ENCODE measurements at regions of chr6 and their contacts with region 1.

Region 1: DNA sequence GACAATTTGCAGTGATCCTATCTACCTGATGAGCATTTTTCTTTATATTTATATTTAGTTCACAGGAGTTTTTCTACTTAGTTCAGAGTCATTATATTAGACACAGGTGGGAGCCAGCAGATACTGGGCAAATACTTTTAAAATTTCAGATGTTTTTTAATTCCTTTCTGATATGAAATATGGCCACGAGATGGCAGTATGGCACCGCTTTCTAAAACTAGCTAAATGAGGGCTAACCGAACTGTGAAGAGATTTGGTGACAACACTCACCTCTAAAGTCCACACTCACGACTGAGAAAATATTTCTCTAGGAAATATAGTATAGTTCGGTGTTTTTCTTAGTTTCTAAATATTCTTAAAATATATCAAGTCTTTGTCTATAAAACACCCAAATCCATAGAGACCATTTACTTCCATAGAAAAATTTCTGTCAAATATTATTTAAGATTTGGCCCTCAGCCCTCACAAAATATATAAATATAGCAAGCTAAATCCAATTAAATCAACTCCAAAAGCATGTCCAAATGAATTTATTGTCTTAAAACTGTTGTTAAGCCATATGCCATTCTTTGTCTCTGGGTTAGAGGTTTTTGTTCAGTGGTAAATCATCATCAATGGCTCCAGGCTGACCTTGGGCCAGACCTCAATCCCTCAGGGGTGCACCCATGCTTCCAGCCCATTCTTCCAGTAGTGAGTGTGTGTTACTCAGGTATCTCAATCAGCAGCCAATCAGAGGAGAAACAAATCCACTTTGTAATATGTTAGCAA is 63.6 kb downstream of the HUS1B start:
- DNase-seq: peak; percentile 33 to 77 (median 56)
- H3K4me3 ChIP-seq: no peak overlapping the region
- H3K27ac ChIP-seq: no peak overlapping the region
- H3K4me1 ChIP-seq: no peaks in the 10 kb centered on the region
- H3K27me3 ChIP-seq: no peaks in the 10 kb centered on the region
- CTCF ChIP-seq: peak; percentile 66 to 82 (median 74)
- POLR2A ChIP-seq: no peak

Region 2: GRCh38 chr6:710601-711571 is 117.6 kb after region 1 on chr6:
- intact Hi-C with region 1: loop called in 1 of 2 experiments (anchors 10 kb)
- DNase-seq: peak; percentile 55 to 75 (median 63)
- H3K4me3 ChIP-seq: peak overlapping the region in 3 of 4 donors; percentile 52 to 82 (median 78)
- H3K27ac ChIP-seq: peak overlapping the region; percentile 79 to 94 (median 92)
- H3K4me1 ChIP-seq: peaks cover 4 to 7% of the 10 kb centered on the region in 2 donors
- H3K27me3 ChIP-seq: no peaks in the 10 kb centered on the region
- CTCF ChIP-seq: no peak
- POLR2A ChIP-seq: peak in 1 of 2 donors; percentile 65

Region 3: GRCh38 chr6:722077-722524 is 128.8 kb after region 1 on chr6:
- intact Hi-C with region 1: loop called (anchors 10 kb)
- DNase-seq: peak; percentile 57 to 82 (median 75)
- H3K4me3 ChIP-seq: peak overlapping the region in 1 of 4 donors; percentile 1
- H3K27ac ChIP-seq: no peak overlapping the region
- H3K4me1 ChIP-seq: no peaks in the 10 kb centered on the region
- H3K27me3 ChIP-seq: no peaks in the 10 kb centered on the region
- CTCF ChIP-seq: peak; percentile 57 to 90 (median 66)
- POLR2A ChIP-seq: no peak

Region 4: GRCh38 chr6:786946-787763 is 193.8 kb after region 1 on chr6:
- intact Hi-C with region 1: loop called in 1 of 2 experiments (anchors 5 kb)
- DNase-seq: peak in 1 of 7 donors; percentile 13
- H3K4me3 ChIP-seq: no peak overlapping the region
- H3K27ac ChIP-seq: no peak overlapping the region
- H3K4me1 ChIP-seq: no peaks in the 10 kb centered on the region
- H3K27me3 ChIP-seq: peaks cover 8% of the 10 kb centered on the region
- CTCF ChIP-seq: peak; percentile 32 to 63 (median 50)
- POLR2A ChIP-seq: no peak

Region 5: DNA sequence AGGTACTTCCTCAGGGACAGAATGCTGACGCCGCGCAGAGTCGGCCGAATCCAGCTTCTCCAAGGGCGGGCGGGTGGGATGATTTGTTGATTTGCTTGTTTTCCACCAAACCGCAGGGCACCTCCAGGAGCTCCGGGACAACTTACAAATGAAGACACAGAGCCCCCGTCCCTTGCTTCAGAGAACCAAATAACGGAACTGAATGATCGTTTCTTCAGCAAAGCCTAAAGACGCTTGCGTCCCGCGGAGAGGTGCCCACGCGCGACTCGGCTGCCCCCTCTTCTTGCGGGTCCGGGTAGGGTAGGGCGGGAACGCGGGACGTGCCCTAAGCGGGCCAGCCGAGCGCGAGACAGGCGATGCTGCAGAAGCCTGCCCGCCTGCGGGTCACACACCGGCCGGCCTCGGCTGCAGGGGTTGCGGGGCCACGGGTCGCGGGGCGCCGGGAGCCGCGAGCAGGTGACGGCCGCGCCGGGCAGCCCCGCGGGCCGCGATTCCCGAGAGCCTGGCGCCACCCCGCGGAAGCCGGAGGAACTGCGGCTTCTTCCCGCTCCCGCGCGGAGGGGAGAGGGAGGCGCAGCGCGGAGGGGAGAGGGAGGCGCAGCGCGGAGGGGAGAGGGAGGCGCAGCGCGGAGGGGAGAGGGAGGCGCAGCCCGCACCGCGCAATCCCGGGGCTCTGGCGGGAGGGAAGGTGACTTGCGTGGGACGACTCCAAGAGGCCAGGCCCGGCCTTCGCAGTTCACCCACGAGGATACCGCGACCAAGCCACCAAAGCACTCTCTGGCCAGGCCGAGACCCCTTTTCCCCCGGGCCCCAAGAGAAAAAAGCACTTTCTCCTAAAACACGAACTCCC is 788.4 kb after region 1 on chr6:
- intact Hi-C with region 1: loop called in 1 of 2 experiments (anchors 5 kb)
- DNase-seq: peak in 5 of 7 donors; percentile 32 to 55 (median 39)
- H3K4me3 ChIP-seq: peak overlapping the region in 1 of 4 donors; percentile 53
- H3K27ac ChIP-seq: no peak overlapping the region
- H3K4me1 ChIP-seq: peaks cover 5 to 29% of the 10 kb centered on the region in 2 donors
- H3K27me3 ChIP-seq: peaks cover 100% of the 10 kb centered on the region
- CTCF ChIP-seq: peak; percentile 33 to 91 (median 72)
- POLR2A ChIP-seq: no peak

Region 6: DNA sequence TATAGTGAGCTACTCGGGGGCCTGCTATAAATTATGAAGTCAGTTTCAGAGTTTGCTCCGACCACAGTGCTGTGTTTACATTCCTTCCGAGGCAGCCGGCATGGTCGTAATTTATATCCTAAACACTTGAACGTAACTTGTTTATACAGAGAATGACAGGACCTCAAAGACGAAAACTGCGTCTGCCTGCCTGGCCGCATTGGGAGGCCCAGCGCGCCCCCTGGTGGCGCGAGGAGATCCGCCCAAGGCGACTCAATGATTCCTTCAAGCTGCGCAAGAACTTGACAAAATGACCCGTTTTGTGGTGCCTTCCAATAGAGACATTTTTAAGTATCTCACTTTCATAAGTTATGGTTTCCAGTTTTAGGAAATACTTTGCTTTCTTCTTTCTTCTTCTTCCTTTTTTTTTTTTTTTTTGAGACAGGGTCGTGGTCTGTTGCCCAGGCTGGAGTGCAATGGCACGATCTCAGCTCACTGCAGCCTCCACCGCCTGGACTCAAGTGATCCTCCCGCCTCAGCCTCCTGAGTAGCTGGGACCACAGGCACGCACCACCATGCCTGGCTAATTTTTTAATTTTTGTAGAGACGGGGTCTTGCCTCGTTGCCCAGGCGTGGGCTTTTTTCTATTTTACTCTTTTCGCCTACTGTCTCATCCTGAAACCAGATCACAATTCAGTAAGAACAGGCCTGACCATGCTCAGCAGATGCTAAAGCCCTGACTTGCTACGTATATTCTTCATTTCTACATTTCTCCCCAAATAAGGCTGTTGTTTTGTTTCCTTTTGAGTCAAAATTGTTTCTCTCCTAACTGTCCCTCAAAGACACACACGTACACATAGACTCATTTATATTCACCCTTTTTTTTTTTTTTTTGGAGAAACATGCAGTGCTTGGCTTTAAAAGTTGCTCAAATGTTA is 803.9 kb after region 1 on chr6:
- intact Hi-C with region 1: loop called in 1 of 2 experiments (anchors 5 kb)
- DNase-seq: peak; percentile 36 to 81 (median 69)
- H3K4me3 ChIP-seq: no peak overlapping the region
- H3K27ac ChIP-seq: no peak overlapping the region
- H3K4me1 ChIP-seq: no peaks in the 10 kb centered on the region
- H3K27me3 ChIP-seq: peaks cover 61% of the 10 kb centered on the region
- CTCF ChIP-seq: peak; percentile 61 to 95 (median 78)
- POLR2A ChIP-seq: no peak